ENCODE measurements at regions of chr1 and their contacts with region 1.

Region 1: GRCh38 chr1:244047621-244048471 is 3.2 kb upstream of the ZBTB18 start:
- DNase-seq: peak; percentile 99 to 100
- ATAC-seq: peak; percentile 92 to 97 (median 94)
- H3K4me3 ChIP-seq: peak overlapping the region; percentile 93
- H3K27ac ChIP-seq: peak overlapping the region; percentile 100
- H3K4me1 ChIP-seq: peaks cover 26% of the 10 kb centered on the region
- H3K27me3 ChIP-seq: no peaks in the 10 kb centered on the region
- CTCF ChIP-seq: no peak

Region 2: GRCh38 chr1:243763806-243764205 is 284.0 kb before region 1 on chr1:
- intact Hi-C with region 1: no loop called
- DNase-seq: no peak
- ATAC-seq: no peak
- H3K4me3 ChIP-seq: no peak overlapping the region
- H3K27ac ChIP-seq: no peak overlapping the region
- H3K4me1 ChIP-seq: peaks cover 5% of the 10 kb centered on the region
- H3K27me3 ChIP-seq: no peaks in the 10 kb centered on the region
- CTCF ChIP-seq: no peak

Region 3: DNA sequence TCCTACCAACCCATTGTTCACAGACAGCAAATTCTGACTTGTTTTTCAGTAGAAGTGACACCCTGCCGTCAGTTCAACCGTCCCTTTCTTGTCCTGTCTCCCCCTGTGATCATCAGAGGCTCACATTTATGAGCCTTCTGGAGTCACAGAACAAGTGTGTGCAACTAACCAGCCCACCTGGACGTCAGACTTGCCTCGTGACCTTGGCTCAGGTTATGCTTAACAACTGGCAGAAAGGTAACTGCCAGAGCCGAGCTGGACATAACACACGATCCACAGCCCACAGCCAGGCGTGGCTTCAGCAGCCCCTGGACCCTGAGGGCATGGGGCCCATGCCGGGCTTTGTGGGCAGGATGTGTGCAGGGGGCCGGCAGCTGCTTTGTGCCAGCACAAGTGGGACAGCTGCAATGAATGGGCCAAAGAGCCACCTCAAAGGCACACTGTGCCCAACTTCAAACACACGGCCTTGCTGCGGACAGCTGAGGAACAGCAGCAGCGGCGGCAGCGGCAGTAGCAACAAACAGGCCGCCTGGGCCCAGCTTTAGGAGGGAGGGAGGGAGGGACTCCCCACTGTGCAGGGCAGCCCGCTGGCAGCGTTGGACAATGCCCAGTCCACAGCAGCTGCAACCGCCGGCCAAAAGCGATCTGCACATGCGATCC is 107.2 kb after region 1 on chr1:
- intact Hi-C with region 1: loop called (anchors 5 to 10 kb)
- DNase-seq: peak; percentile 40 to 75
- ATAC-seq: peak; percentile 90 to 96 (median 92)
- H3K4me3 ChIP-seq: peak overlapping the region; percentile 44
- H3K27ac ChIP-seq: peak overlapping the region; percentile 89
- H3K4me1 ChIP-seq: peaks cover 15% of the 10 kb centered on the region
- H3K27me3 ChIP-seq: no peaks in the 10 kb centered on the region
- CTCF ChIP-seq: no peak

Region 4: DNA sequence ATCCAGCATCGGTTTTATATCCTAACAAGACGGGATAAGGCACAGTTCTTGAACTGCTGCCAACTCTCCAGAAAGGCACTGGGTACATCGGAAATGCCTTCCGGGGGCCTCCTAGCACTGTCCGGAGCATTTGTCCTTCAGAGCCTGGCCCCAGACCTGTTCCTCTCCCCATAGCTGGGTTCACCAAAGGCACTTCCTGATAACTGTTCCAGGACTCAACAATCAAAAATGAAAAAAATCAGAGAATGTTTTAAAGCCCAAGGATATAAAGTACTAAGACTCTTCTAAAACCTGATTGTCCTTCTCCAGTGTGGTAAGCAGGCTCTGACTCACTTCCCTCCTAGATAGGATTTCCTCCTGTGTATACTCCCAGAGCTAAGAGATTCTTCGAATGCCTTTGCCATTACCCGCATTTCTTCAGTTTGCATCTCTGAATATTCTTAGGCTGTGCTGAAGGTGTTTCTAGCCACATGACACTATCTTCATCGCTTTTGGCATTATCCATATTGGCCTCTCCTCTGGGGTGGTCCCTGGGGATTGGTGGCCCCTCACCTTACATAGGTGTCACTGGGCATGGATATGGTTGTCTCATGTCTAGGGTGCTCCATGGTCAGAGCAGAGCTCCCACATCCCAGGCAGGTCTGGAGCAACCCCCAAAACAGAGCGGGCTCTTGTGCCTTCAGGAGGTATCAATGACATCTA is 116.2 kb after region 1 on chr1:
- intact Hi-C with region 1: loop called (anchors 5 to 10 kb)
- DNase-seq: no peak
- ATAC-seq: peak; percentile 92 to 97 (median 94)
- H3K4me3 ChIP-seq: peak overlapping the region; percentile 27
- H3K27ac ChIP-seq: peak overlapping the region; percentile 92
- H3K4me1 ChIP-seq: peaks cover 18% of the 10 kb centered on the region
- H3K27me3 ChIP-seq: peaks cover 0 to 2% (median 0%) of the 10 kb centered on the region in 3 donors
- CTCF ChIP-seq: no peak

Region 5: GRCh38 chr1:244207042-244207934 is 159.4 kb after region 1 on chr1:
- intact Hi-C with region 1: loop called in 1 of 2 experiments (anchors 5 kb)
- DNase-seq: no peak
- ATAC-seq: no peak
- H3K4me3 ChIP-seq: no peak overlapping the region
- H3K27ac ChIP-seq: peak overlapping the region; percentile 64
- H3K4me1 ChIP-seq: peaks cover 15% of the 10 kb centered on the region
- H3K27me3 ChIP-seq: peaks cover 0 to 2% (median 0%) of the 10 kb centered on the region in 3 donors
- CTCF ChIP-seq: no peak

Region 6: GRCh38 chr1:244231572-244232315 is 183.9 kb after region 1 on chr1:
- intact Hi-C with region 1: loop called (anchors 2 to 5 kb)
- DNase-seq: peak; percentile 58 to 83
- ATAC-seq: peak; percentile 82 to 90 (median 88)
- H3K4me3 ChIP-seq: peak overlapping the region; percentile 52
- H3K27ac ChIP-seq: peak overlapping the region; percentile 89
- H3K4me1 ChIP-seq: peaks cover 20% of the 10 kb centered on the region
- H3K27me3 ChIP-seq: no peaks in the 10 kb centered on the region
- CTCF ChIP-seq: no peak